Activated CD8-positive, alpha-beta T cell treated with anti-CD3 and anti-CD28 coated beads for 36 hours (primary cell): ENCODE measurements at regions of chr6 and their contacts with region 1.

Region 1: DNA sequence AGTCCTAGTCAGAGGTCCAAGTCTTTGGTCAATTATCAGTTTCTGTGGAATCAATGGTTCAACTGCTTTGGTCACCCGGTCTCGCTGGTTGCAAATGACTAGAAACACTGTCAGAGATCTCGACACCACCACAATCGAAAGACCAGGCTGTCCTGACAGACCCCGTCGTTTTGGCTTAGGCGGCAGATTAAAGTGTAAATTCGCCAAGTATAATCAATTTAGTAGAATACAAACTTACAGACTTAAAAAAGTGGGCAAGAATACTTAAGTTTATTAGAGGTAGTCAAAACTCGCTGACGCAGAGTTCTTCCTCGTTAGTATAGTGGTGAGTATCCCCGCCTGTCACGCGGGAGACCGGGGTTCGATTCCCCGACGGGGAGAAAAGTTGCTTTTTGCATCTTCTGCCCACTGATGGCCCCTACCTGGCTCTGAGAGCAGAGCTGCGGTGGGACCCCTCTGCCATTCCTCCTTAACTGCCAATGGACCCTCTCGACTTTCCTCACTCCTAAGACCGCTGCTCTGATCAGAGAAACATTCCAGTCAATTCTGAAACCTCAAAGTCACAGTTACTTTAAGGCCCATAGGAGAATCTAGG is 30.6 kb upstream of the ZNF184 start:
- DNase-seq: peak; percentile 87
- ATAC-seq: peak; percentile 54
- H3K4me3 Mint-ChIP-seq: peak overlapping the region; percentile 89
- H3K27ac Mint-ChIP-seq: peak overlapping the region; percentile 91
- H3K4me1 Mint-ChIP-seq: peaks cover 34% of the 10 kb centered on the region
- H3K27me3 Mint-ChIP-seq: peaks cover 10% of the 10 kb centered on the region
- CTCF ChIP-seq: no peak

Region 2: GRCh38 chr6:27188885-27189418 is 314.6 kb before region 1 on chr6:
- CTCF ChIA-PET with region 1: no interaction called
- POLR2A ChIA-PET with region 1: no interaction called
- intact Hi-C with region 1: loop called (anchors 10 kb)
- DNase-seq: peak; percentile 73
- ATAC-seq: peak; percentile 89
- H3K4me3 Mint-ChIP-seq: peak overlapping the region; percentile 93
- H3K27ac Mint-ChIP-seq: peak overlapping the region; percentile 72
- H3K4me1 Mint-ChIP-seq: peaks cover 7% of the 10 kb centered on the region
- H3K27me3 Mint-ChIP-seq: peaks cover 1% of the 10 kb centered on the region
- CTCF ChIP-seq: peak; percentile 85

Region 3: DNA sequence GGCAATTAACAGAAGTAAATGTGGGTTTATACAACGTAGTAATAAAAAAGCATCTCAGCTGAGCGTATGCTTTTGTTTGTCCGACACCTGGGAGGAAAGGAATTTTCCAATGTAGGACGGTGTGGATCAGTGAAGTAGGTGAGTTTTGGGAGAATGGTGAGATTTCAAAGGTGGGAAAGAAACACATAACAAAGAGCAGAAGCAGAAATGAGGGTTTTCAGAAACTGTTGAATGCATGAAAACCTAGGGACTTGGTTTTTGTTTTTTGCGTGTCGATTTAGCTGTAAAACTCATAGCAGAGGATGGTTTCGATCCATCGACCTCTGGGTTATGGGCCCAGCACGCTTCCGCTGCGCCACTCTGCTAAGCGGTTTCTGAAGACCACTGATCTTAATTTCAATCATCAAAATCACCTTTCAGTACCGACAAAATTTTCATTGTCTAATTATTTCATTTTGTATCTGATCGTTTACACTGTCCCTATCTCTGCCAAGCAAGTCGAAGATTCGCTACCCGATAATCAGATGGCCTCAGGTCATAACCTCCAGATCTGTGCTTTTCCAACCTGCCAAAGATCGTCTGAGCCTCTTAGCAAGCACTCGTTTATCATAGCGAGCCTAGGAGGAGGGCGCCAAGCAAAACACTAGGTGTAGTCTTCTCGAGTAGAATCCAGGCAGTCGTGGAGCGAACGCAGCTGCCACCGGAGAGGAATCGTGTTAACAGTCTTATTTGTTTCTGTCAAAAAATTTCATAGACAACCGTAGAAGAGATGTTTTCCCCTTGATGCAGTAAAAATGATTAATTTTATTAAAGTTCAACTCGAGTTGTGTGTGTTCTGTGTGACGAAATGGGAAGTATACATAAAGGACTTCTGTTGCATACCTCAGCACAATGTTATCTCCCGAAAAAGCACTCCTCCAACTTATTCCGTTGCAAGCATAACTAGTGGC is 170.6 kb before region 1 on chr6:
- CTCF ChIA-PET with region 1: no interaction called
- POLR2A ChIA-PET with region 1: no interaction called
- intact Hi-C with region 1: no loop called
- DNase-seq: peak; percentile 69
- ATAC-seq: peak; percentile 86
- H3K4me3 Mint-ChIP-seq: peak overlapping the region; percentile 72
- H3K27ac Mint-ChIP-seq: peak overlapping the region; percentile 62
- H3K4me1 Mint-ChIP-seq: peaks cover 16% of the 10 kb centered on the region
- H3K27me3 Mint-ChIP-seq: peaks cover 23% of the 10 kb centered on the region
- CTCF ChIP-seq: no peak

Region 4: DNA sequence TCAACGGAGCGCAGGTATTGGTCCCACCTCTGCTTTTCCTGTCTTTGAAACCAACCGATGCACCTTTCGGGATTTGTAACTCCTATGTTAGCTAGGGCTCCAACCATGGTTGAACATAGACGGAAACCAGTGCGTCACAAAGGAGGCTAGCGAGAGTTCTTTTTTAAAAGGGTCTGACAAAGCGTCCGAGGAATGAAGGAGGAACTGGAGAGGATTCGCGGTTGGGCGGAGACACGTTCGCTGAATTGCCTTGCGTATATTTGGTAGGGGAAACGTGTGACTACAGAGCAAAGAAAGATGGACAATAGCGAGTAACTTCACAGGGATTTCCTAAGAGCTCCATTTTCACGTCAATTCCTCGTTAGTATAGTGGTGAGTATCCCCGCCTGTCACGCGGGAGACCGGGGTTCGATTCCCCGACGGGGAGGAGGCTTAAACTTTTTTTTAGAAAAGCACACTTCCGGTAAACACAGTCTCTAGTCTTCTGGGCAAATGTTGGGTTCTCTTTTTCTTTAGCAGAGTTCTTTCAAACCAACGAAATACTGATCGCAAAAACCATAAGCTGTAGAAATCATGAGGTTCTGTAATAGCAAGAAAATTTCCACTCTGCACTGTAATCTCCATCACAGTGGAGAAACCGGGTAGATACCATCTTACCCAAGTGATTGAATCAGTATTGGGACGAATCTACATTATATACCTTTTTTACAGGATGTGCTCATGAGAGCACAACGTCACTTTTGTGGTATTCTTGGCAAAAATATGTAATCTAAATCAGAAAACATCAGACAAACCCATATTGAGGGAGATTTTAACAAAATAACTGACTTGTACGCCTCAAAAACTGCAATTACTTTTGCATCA is 24.0 kb before region 1 on chr6:
- CTCF ChIA-PET with region 1: no interaction called
- POLR2A ChIA-PET with region 1: interaction called, 6 read pairs
- intact Hi-C with region 1: loop called (anchors 1 kb)
- DNase-seq: peak; percentile 86
- ATAC-seq: peak; percentile 57
- H3K4me3 Mint-ChIP-seq: no peak overlapping the region
- H3K27ac Mint-ChIP-seq: no peak overlapping the region
- H3K4me1 Mint-ChIP-seq: peaks cover 6% of the 10 kb centered on the region
- H3K27me3 Mint-ChIP-seq: no peaks in the 10 kb centered on the region
- CTCF ChIP-seq: no peak

Region 5: DNA sequence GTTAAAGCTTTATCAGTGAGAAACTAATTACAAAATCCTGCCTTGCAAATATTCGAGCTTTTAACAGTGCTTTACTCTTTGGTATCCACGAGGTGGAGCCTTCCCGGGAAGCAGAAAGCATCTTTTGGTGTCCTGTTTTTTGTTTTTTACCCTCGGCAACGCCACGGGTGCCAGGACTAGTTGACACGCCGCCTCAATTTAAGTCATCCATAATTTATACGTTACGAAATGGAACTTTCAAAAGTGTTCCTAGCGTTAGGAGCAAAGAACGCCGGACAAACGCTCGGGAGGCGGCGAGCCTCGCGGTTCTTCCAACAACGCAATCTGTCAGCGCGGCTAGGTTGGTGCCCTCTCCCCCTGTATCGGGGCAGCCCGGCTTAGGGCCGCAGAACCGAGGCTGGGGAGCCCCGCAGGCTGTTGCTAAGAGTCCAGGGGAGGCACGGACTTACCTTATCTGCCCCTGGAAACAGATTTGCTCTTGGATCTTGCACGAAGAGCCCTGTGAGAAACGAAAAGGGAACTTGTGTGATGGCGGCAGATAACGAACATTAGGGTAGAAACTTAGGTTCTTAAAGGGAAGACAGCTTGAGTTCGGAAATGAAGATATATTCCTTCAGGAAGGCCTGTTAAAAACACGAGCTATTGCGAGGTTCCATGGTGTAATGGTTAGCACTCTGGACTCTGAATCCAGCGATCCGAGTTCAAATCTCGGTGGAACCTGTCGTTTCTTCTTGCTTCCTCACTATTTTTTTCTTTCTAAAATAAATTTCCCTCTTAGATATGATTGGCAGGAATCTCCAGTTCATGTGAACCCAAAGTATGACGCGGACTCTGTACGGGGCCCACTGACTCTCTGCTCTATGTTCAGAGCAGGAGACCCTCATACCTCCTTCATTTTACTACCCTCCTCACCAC is 15.6 kb after region 1 on chr6:
- CTCF ChIA-PET with region 1: interaction called, 49 read pairs
- POLR2A ChIA-PET with region 1: interaction called, 6 read pairs
- intact Hi-C with region 1: no loop called
- DNase-seq: peak; percentile 80
- ATAC-seq: peak; percentile 77
- H3K4me3 Mint-ChIP-seq: peak overlapping the region; percentile 87
- H3K27ac Mint-ChIP-seq: peak overlapping the region; percentile 87
- H3K4me1 Mint-ChIP-seq: peaks cover 19% of the 10 kb centered on the region
- H3K27me3 Mint-ChIP-seq: peaks cover 20% of the 10 kb centered on the region
- CTCF ChIP-seq: peak; percentile 88

Region 6: GRCh38 chr6:27687154-27688013 is 183.9 kb after region 1 on chr6:
- CTCF ChIA-PET with region 1: no interaction called
- POLR2A ChIA-PET with region 1: no interaction called
- intact Hi-C with region 1: loop called (anchors 10 kb)
- DNase-seq: peak; percentile 91
- ATAC-seq: peak; percentile 81
- H3K4me3 Mint-ChIP-seq: peak overlapping the region; percentile 78
- H3K27ac Mint-ChIP-seq: peak overlapping the region; percentile 88
- H3K4me1 Mint-ChIP-seq: peaks cover 10% of the 10 kb centered on the region
- H3K27me3 Mint-ChIP-seq: peaks cover 8% of the 10 kb centered on the region
- CTCF ChIP-seq: peak; percentile 70